ENCODE measurements at regions of chr11 and their contacts with region 1.

Region 1: DNA sequence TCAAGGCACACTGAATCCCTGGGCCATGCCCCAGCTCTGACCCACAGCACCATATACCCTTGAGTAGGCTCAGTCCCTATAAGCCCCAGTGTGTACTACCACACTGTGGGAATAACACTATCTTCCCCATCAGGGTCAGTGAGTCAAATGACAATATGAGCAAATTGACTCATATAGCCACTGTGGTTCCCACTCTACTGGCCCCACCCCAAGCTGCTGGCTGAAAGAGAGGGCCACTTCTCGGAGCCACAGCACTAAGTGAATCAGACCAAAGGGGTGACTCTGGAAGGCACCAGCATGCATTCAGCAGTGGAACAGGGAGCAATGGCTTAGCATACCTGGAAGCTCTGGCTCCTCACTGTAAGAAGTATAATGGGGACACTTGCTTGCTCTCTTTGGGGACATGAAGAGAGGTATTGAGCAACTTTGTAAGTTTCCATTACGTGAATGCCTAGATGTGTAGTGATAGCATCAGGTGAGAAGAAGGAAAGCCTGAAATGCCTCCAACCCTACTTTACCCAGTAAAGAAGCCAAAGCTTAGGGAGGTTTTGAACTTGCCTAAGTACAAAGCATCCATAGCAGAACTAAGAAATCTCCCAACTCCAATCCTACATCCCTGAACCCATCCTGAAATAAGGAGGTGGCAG is 13.5 kb downstream of the CD59 start:
- DNase-seq: peak in 1 of 5 donors; percentile 61
- ATAC-seq: peak in 3 of 4 donors; percentile 1 to 30 (median 26)
- H3K4me3 ChIP-seq: peak overlapping the region in 1 of 12 donors; percentile 7
- H3K27ac ChIP-seq: peak overlapping the region; percentile 78 to 96 (median 91)
- H3K4me1 ChIP-seq: peaks cover 40 to 95% (median 70%) of the 10 kb centered on the region in 12 donors
- H3K27me3 ChIP-seq: no peaks in the 10 kb centered on the region
- CTCF ChIP-seq: no peak
- POLR2A ChIP-seq: no peak

Region 2: DNA sequence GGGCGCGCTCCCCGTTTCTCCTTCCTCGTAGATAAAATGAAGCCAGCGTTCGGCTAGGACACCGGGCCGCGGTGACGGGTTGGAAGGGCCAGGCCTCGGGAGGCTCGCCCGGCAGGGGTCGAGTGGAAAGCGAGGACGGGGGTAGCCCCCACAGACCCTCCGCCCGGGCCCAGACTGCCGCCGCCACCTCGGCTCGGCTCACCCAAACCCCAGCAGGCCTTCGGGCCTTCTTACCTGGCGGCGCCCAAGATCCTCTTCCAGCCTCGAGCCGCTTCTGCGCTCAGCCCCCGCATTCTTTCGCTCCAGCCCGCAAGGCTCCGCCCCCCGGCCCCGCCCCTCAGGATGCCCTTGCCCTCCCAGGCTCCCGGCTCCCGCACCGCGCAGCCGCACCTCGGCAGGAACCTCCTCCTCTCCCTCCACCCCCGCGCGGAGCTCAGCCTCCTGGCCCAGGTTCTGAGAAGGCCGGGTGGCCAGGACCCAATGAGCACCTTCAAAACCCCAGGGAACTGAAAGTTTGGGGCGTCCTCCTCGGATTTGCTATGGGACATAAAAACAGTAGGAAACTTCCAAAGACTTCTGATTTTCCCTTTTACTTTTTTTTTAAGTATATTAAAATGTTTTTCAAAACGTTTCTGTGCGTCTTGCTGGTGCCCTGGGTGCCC is 13.6 kb after region 1 on chr11 and contains the start of gene CD59:
- intact Hi-C with region 1: loop called in 1 of 10 experiments (anchors 1 kb)
- DNase-seq: peak; percentile 98
- ATAC-seq: peak; percentile 94 to 96 (median 96)
- H3K4me3 ChIP-seq: peak within 1 kb of the TSS; percentile 75 to 98 (median 92)
- H3K27ac ChIP-seq: peak within 1 kb of the TSS; percentile 93 to 100 (median 98)
- H3K4me1 ChIP-seq: peaks cover 4 to 51% (median 41%) of the 10 kb centered on the region in 12 donors
- H3K27me3 ChIP-seq: no peaks in the 10 kb centered on the region
- CTCF ChIP-seq: peak in 1 of 12 donors; percentile 19
- POLR2A ChIP-seq: peak; percentile 80 to 98
- total RNA-seq, gene CD59: 588 to 1,434 (median 930) TPM

Measured in heart left ventricle (tissue), 16 donors.